ENCODE measurements at regions of chr11 and their contacts with region 1.

Region 1: GRCh38 chr11:19121646-19122045 is 4.7 kb downstream of the ZDHHC13 start:
- DNase-seq: no peak
- ATAC-seq: no peak
- H3K4me3 ChIP-seq: no peak overlapping the region
- H3K4me3 Mint-ChIP-seq: no peak overlapping the region
- H3K27ac ChIP-seq: no peak overlapping the region
- H3K27ac Mint-ChIP-seq: no peak overlapping the region
- H3K4me1 ChIP-seq: peaks cover 7 to 16% of the 10 kb centered on the region in 2 experiments
- H3K4me1 Mint-ChIP-seq: peaks cover 60 to 66% (median 62%) of the 10 kb centered on the region in 3 donors
- H3K27me3 ChIP-seq: no peaks in the 10 kb centered on the region
- H3K27me3 Mint-ChIP-seq: no peaks in the 10 kb centered on the region

Region 2: DNA sequence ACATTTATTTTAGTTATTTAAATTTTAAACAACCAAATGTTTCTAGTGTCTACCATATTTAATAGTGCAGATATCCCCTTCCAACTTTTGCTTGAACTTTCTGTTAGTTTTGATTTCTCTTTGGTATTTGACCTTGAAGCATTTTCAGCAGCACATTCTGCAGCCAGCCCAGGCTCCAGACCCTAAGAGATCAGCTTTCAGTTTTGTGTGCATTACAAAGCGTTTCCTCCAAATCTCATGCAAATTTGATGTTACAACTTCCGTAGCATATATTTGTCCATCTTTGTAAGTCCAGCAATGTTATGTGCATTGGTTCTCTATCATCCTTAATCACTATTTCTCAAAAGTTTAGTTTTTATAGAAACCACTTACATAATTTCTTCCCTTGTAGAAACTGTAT is 1094.2 kb before region 1 on chr11:
- CTCF ChIA-PET with region 1: interaction called in 1 of 2 experiments, 15 read pairs
- POLR2A ChIA-PET with region 1: no interaction called
- DNase-seq: no peak
- ATAC-seq: no peak
- H3K4me3 ChIP-seq: no peak overlapping the region
- H3K4me3 Mint-ChIP-seq: no peak overlapping the region
- H3K27ac ChIP-seq: no peak overlapping the region
- H3K27ac Mint-ChIP-seq: no peak overlapping the region
- H3K4me1 ChIP-seq: no peaks in the 10 kb centered on the region
- H3K4me1 Mint-ChIP-seq: no peaks in the 10 kb centered on the region
- H3K27me3 ChIP-seq: no peaks in the 10 kb centered on the region
- H3K27me3 Mint-ChIP-seq: no peaks in the 10 kb centered on the region

Region 3: DNA sequence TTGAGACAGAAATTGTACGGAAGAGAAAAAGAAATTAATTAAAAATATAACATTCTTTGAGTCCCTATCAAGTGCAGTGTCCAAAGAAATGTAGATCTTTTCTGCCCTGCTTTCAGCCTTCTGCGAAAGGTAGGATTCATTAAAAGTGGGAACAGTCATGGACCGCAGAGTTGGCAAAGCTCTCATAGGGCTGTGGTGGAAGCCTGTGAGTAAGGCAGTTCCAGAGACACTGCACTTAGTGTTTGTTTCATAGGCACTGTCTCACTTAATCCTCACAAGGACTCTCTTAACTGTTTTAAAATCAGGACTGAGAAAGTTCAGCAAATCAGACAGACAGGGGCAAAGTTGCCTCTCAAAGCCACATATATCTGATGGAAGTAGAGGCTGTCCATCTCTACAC is 66.6 kb before region 1 on chr11:
- CTCF ChIA-PET with region 1: no interaction called
- POLR2A ChIA-PET with region 1: no interaction called
- DNase-seq: no peak
- ATAC-seq: no peak
- H3K4me3 ChIP-seq: no peak overlapping the region
- H3K4me3 Mint-ChIP-seq: no peak overlapping the region
- H3K27ac ChIP-seq: no peak overlapping the region
- H3K27ac Mint-ChIP-seq: no peak overlapping the region
- H3K4me1 ChIP-seq: no peaks in the 10 kb centered on the region
- H3K4me1 Mint-ChIP-seq: peaks cover 0 to 5% (median 5%) of the 10 kb centered on the region in 3 donors
- H3K27me3 ChIP-seq: no peaks in the 10 kb centered on the region
- H3K27me3 Mint-ChIP-seq: peaks cover 3 to 13% of the 10 kb centered on the region in 2 donors

Measured in T-cell (primary cell).